CD4-positive, alpha-beta memory T cell (primary cell): ENCODE measurements at regions of chr10 and their contacts with region 1.

Region 1: GRCh38 chr10:119542988-119543813 is 682 bp upstream of the RGS10 start:
- DNase-seq: peak; percentile 60 to 67 (median 64)
- H3K4me3 ChIP-seq: peak overlapping the region in 1 of 2 donors; percentile 88
- H3K4me3 Mint-ChIP-seq: peak overlapping the region; percentile 94 to 98 (median 95)
- H3K27ac ChIP-seq: peak overlapping the region; percentile 57
- H3K27ac Mint-ChIP-seq: peak overlapping the region; percentile 83 to 96 (median 91)
- H3K4me1 ChIP-seq: peaks cover 42% of the 10 kb centered on the region
- H3K4me1 Mint-ChIP-seq: peaks cover 28 to 43% (median 38%) of the 10 kb centered on the region in 4 donors
- H3K27me3 ChIP-seq: no peaks in the 10 kb centered on the region
- H3K27me3 Mint-ChIP-seq: no peaks in the 10 kb centered on the region

Region 2: DNA sequence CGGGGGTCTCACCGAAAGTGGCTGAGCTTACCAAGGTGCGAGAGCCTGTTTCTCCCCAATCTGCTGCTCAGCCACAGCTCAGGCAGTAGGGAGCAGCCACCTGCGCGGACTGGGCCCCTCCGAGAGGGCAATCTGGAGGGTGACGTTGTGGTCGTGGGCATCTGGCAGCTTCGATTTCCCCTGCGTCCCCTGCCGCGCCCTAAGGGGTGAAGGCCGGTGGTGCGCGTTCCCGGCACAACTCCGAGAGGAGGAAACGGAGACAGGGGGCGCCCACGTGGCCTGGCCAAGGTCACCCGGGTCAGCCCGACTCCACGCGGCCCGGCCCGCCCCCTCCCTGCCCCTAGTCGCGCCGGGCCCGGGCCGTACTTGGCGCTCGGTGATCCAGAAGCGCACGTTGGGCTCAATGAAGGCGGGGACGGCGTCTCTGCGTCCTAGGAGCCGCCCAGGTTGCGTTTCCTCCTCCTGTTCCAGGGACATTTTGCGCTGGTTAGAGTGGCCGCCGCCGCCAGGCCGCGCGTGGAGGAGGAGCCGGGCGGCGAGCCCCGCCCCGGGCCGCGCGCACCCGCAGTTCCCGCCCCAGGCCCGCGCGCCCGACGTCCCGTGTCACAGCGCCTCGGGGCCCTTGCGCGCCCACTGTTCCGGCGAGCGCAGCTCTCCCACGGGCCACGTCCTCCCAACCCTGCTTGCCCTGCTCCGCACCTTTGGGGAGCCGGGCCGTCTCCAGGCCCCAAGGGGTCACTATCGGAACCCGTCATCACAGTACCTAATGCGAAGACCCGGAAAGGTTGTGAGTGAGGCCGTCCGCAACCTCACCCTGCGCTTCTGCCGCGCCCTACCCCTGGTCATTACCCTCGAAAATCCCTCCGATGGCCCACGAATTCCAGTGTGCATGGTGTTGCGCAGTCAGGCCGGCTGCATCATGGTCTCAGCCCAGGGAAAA is 377.8 kb before region 1 on chr10 and contains the start of gene SFXN4:
- CTCF ChIA-PET with region 1: no interaction called
- POLR2A ChIA-PET with region 1: interaction called, 6 read pairs
- intact Hi-C with region 1: loop called (anchors 1 kb)
- DNase-seq: peak; percentile 76 to 87 (median 85)
- H3K4me3 ChIP-seq: peak within 1 kb of the TSS; percentile 73 to 92
- H3K4me3 Mint-ChIP-seq: peak within 1 kb of the TSS; percentile 90 to 94 (median 92)
- H3K27ac ChIP-seq: peak within 1 kb of the TSS; percentile 65
- H3K27ac Mint-ChIP-seq: peak within 1 kb of the TSS; percentile 87 to 96 (median 95)
- H3K4me1 ChIP-seq: peaks cover 20% of the 10 kb centered on the region
- H3K4me1 Mint-ChIP-seq: peaks cover 9 to 43% (median 27%) of the 10 kb centered on the region in 4 donors
- H3K27me3 ChIP-seq: no peaks in the 10 kb centered on the region
- H3K27me3 Mint-ChIP-seq: no peaks in the 10 kb centered on the region
- total RNA-seq, gene SFXN4: 17.2 to 18.5 TPM

Region 3: GRCh38 chr10:119305860-119306513 is 237.2 kb before region 1 on chr10:
- CTCF ChIA-PET with region 1: interaction called, 3 read pairs
- POLR2A ChIA-PET with region 1: interaction called, 9 read pairs
- intact Hi-C with region 1: loop called (anchors 1 kb)
- DNase-seq: peak; percentile 78 to 98 (median 81)
- H3K4me3 ChIP-seq: peak overlapping the region; percentile 66 to 70
- H3K4me3 Mint-ChIP-seq: peak overlapping the region; percentile 87 to 94 (median 90)
- H3K27ac ChIP-seq: peak overlapping the region; percentile 75
- H3K27ac Mint-ChIP-seq: peak overlapping the region; percentile 96 to 99 (median 98)
- H3K4me1 ChIP-seq: peaks cover 62% of the 10 kb centered on the region
- H3K4me1 Mint-ChIP-seq: peaks cover 46 to 76% (median 63%) of the 10 kb centered on the region in 4 donors
- H3K27me3 ChIP-seq: no peaks in the 10 kb centered on the region
- H3K27me3 Mint-ChIP-seq: peaks cover 0 to 6% of the 10 kb centered on the region in 2 donors

Region 4: DNA sequence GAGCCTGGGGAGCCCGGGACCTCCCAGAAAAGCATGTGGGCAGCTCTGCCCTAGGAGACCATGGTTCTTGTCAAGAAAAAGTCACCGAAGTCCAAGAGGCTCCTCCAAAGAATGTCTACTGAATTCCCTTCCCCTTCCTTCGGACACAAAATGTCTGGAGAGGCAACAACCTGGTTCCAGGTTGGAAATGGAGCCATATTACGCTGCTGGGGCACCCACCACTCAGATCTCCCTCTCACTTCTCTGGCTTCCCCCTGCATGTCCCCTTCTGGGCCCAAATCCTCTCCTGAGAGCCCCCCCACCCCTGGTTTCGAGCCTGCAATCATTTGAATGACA is 53.2 kb before region 1 on chr10:
- CTCF ChIA-PET with region 1: interaction called, 50 read pairs
- POLR2A ChIA-PET with region 1: interaction called, 26 read pairs
- intact Hi-C with region 1: loop called (anchors 1 kb)
- DNase-seq: no peak
- H3K4me3 ChIP-seq: peak overlapping the region in 1 of 2 donors; percentile 51
- H3K4me3 Mint-ChIP-seq: peak overlapping the region; percentile 18 to 92 (median 88)
- H3K27ac ChIP-seq: peak overlapping the region; percentile 68
- H3K27ac Mint-ChIP-seq: peak overlapping the region; percentile 82 to 97 (median 95)
- H3K4me1 ChIP-seq: peaks cover 45% of the 10 kb centered on the region
- H3K4me1 Mint-ChIP-seq: peaks cover 25 to 50% (median 33%) of the 10 kb centered on the region in 4 donors
- H3K27me3 ChIP-seq: no peaks in the 10 kb centered on the region
- H3K27me3 Mint-ChIP-seq: no peaks in the 10 kb centered on the region

Region 5: DNA sequence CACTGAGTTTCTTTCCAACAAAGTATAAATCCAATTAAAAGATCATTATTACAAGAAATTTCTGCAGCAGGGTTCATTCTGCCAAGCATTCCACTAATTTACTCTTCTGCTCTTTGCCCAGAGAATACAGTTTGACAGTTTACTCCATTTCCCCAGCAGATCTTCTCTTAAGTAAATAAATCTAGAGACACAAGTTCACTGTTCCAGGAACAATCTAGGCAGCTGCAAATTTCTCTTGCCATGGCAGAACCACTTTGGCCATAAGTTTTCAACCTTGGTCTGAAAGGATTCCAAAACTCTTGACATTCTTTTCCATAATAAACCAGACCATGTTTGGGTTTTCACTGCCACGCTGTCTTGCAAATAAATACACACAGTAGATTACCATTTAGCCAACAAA is 12.1 kb before region 1 on chr10:
- CTCF ChIA-PET with region 1: interaction called, 13 read pairs
- POLR2A ChIA-PET with region 1: interaction called, 12 read pairs
- intact Hi-C with region 1: no loop called
- DNase-seq: no peak
- H3K4me3 ChIP-seq: no peak overlapping the region
- H3K4me3 Mint-ChIP-seq: no peak overlapping the region
- H3K27ac ChIP-seq: no peak overlapping the region
- H3K27ac Mint-ChIP-seq: peak overlapping the region in 5 of 7 donors; percentile 1 to 25 (median 14)
- H3K4me1 ChIP-seq: peaks cover 42% of the 10 kb centered on the region
- H3K4me1 Mint-ChIP-seq: peaks cover 36 to 70% (median 46%) of the 10 kb centered on the region in 4 donors
- H3K27me3 ChIP-seq: no peaks in the 10 kb centered on the region
- H3K27me3 Mint-ChIP-seq: no peaks in the 10 kb centered on the region

Region 6: DNA sequence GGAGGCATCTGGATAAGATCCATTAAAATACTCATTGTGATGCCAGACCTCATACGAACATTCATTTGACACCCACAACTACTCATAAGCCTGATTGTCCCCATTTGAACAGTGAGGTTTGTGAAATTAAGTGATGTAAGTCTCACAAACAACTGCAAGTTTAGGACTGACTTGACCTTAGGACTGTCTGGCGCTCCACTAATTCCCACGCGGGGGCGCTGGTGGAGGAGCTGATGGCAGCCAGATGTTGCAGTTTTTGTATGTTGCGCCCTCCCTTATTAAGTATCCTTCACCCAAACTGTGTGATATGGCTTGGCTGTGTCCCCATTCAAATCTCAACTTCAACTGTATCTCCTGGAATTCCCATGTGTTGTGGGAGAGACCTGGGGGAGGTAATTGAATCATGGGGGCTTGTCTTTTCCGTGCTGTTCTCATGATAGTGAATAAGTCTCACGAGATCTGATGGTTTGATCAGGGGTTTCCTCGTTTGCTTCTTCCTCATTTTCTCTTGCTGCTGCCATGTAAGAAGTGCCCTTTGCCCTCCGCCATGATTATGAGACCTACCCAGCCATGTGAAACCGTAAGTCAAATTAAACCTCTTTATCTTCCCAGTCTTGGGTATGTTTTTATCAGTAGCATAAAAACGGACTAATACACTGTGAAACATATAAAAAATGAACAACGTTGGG is 73.8 kb after region 1 on chr10:
- CTCF ChIA-PET with region 1: no interaction called
- POLR2A ChIA-PET with region 1: no interaction called
- intact Hi-C with region 1: no loop called
- DNase-seq: peak in 2 of 5 donors; percentile 16 to 19
- H3K4me3 ChIP-seq: no peak overlapping the region
- H3K4me3 Mint-ChIP-seq: no peak overlapping the region
- H3K27ac ChIP-seq: no peak overlapping the region
- H3K27ac Mint-ChIP-seq: no peak overlapping the region
- H3K4me1 ChIP-seq: no peaks in the 10 kb centered on the region
- H3K4me1 Mint-ChIP-seq: no peaks in the 10 kb centered on the region
- H3K27me3 ChIP-seq: no peaks in the 10 kb centered on the region
- H3K27me3 Mint-ChIP-seq: peaks cover 0 to 2% of the 10 kb centered on the region in 2 donors

Region 7: GRCh38 chr10:119872860-119873681 is 329.9 kb after region 1 on chr10:
- CTCF ChIA-PET with region 1: no interaction called
- POLR2A ChIA-PET with region 1: interaction called, 6 read pairs
- intact Hi-C with region 1: loop called (anchors 2 kb)
- DNase-seq: peak; percentile 87 to 89 (median 88)
- H3K4me3 ChIP-seq: peak overlapping the region; percentile 76 to 90
- H3K4me3 Mint-ChIP-seq: peak overlapping the region; percentile 86 to 92 (median 89)
- H3K27ac ChIP-seq: peak overlapping the region; percentile 85
- H3K27ac Mint-ChIP-seq: peak overlapping the region; percentile 91 to 96 (median 94)
- H3K4me1 ChIP-seq: peaks cover 46% of the 10 kb centered on the region
- H3K4me1 Mint-ChIP-seq: peaks cover 26 to 46% (median 37%) of the 10 kb centered on the region in 4 donors
- H3K27me3 ChIP-seq: no peaks in the 10 kb centered on the region
- H3K27me3 Mint-ChIP-seq: no peaks in the 10 kb centered on the region